AG04449 (cell line): ENCODE measurements at regions of chr20 and their contacts with region 1.

Region 1: GRCh38 chr20:48904365-48905296 is 16.9 kb upstream of the ARFGEF2 start:
- DNase-seq: no peak
- H3K4me3 ChIP-seq: no peak overlapping the region
- CTCF ChIP-seq: peak; percentile 51

Region 2: DNA sequence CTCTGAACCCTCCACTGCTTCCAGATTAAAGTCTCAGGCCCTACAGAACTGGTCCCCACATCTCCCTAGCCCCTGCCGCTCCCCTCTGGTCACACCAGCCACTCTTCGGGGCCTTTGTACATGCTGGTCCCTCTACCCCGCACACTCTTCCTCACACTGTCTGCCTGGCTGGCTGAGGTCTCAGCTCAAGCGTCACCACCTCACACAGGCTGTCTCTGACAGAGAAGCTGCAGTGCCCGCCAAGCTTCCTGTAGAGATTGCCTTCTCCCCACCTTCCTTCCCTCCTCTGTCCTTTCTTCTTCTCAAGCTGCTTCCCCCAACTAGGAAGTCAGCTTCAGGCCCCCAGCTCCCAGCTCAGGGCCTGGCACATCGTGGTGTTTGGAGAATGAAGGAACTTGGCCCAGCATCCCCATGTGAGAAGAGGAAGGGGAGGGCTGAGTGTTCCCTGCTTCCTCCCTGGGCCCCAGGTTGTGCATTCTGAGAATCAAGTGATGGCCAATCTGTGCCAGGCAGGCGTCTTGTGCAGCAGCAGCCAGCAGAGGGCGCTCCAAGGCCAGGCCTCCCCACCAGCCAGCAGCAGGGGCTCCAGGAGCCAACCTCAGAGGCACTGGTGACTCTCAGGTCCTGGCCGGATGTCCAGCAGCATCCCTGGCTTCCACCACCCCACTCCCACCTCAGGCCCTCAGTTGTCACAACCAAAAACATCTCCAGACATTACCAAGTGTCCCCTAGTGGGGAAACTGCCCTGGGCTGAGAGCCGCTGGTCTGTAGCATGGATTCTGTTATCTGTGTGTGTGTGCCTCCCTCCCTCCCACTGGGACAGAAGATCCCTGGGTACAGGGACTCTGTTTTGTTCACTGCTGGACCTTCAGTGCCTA is 269.0 kb before region 1 on chr20:
- CTCF ChIA-PET with region 1: interaction called, 45 read pairs
- POLR2A ChIA-PET with region 1: no interaction called
- DNase-seq: no peak
- H3K4me3 ChIP-seq: no peak overlapping the region
- CTCF ChIP-seq: peak; percentile 96

Region 3: DNA sequence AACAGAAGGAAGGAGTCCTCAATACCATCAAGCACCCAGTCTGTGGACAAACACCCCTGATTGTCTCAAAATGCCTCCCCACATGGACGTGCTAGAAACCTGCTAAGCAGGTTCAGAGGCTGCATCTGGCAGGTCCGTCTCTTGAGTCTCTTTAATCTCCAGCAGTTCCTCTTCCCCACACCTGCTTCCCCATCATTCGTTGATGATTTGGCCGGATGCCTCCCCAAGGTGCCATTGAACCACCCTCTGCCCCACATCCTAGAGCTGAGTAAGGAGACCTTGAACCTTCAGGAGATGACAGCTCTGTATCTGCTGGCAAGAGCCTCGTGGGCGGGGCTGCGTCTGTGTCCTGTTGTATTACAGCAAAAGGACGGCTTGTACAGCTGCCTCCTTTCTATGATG is 256.1 kb before region 1 on chr20:
- CTCF ChIA-PET with region 1: interaction called, 534 read pairs
- POLR2A ChIA-PET with region 1: no interaction called
- DNase-seq: no peak
- H3K4me3 ChIP-seq: no peak overlapping the region
- CTCF ChIP-seq: no peak

Region 4: DNA sequence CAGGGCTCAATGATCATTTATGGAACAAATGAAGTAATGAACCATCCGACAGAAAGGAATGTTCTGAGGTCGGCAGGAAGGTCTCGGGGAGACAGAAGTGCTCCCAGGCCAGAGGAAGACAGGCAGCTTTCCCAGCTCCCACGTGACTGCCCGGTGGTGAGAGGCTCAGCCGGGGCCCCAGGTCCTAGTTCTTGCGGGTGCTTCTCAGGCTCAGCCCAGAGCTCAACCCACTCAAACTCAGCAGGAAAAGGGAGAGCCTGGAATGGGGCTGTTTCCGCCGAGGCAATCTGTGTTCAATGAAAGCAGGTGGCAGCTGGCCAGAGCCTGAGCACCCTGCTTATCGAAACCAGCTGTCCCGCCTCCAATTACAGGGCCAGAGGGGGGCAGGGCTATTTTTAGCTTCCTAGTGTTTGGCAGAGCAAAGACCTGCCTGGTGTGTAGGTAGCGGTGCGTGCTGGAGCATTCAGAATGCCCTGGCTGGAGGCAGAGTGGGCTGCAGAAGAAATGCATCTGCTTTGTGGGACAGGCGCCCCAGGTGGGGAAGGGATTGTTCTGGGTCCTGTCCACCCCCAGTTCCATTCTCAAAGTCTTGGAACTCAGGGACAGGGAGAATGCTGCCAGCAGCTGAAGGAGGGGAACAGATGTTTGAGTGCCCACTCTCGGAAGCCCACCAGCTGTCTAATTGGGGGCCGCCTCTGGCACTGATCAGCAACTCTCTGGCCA is 221.9 kb before region 1 on chr20:
- CTCF ChIA-PET with region 1: interaction called, 12 read pairs
- POLR2A ChIA-PET with region 1: no interaction called
- DNase-seq: peak; percentile 84
- H3K4me3 ChIP-seq: peak overlapping the region; percentile 6; the same call in 1 of the 2 replicates
- CTCF ChIP-seq: no peak

Region 5: GRCh38 chr20:48921151-48921898 is 16.7 kb after region 1 on chr20 and contains the start of gene ARFGEF2:
- CTCF ChIA-PET with region 1: interaction called, 26 read pairs
- POLR2A ChIA-PET with region 1: no interaction called
- DNase-seq: no peak
- H3K4me3 ChIP-seq: peak within 1 kb of the TSS; percentile 91
- CTCF ChIP-seq: peak; percentile 31

Region 6: DNA sequence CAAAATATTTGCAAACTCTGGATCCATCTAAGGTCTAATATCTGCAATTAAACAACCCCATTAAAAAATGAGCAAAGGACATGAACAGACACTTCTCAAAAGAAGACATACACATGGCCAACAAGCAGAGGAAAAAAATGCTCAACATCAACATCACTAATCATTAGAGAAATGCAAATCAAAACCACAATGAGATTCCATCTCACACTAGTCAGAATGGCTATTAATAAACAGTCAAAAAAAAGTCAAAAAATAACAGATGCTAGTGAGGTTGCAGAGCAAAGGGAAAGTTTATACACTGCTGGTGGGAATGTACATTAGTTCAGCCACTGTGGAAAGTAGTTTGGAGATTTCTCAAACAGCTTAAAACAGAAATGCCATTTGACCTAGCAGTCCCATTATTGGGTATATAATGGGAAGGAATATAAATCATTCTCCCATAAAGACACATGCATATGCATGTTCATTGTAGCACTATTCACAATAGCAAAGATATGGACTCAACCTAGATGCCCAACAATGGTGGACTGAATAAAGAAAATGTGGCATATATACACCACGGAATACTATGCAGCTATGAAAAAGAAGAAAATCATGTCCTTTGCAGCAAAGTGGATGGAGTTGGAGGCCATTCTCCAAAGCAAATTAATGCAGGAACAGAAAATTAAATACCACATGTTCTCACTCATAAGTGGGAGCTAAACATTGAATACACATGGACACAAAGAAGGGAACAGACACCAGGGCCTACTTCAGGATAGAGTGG is 364.2 kb after region 1 on chr20:
- CTCF ChIA-PET with region 1: no interaction called
- POLR2A ChIA-PET with region 1: no interaction called
- DNase-seq: no peak
- H3K4me3 ChIP-seq: no peak overlapping the region
- CTCF ChIP-seq: no peak